Pancreas (tissue), 10 donors: ENCODE measurements at regions of chr3 and their contacts with region 1.

Region 1: GRCh38 chr3:101803173-101803782 is 24.3 kb downstream of the NXPE3 start:
- DNase-seq: peak in 3 of 6 donors; percentile 21 to 49 (median 49)
- ATAC-seq: peak; percentile 93 to 100 (median 98)
- H3K4me3 ChIP-seq: no peak overlapping the region
- H3K27ac ChIP-seq: no peak overlapping the region
- H3K4me1 ChIP-seq: no peaks in the 10 kb centered on the region
- H3K27me3 ChIP-seq: no peaks in the 10 kb centered on the region
- CTCF ChIP-seq: peak; percentile 62 to 86 (median 78)

Region 2: DNA sequence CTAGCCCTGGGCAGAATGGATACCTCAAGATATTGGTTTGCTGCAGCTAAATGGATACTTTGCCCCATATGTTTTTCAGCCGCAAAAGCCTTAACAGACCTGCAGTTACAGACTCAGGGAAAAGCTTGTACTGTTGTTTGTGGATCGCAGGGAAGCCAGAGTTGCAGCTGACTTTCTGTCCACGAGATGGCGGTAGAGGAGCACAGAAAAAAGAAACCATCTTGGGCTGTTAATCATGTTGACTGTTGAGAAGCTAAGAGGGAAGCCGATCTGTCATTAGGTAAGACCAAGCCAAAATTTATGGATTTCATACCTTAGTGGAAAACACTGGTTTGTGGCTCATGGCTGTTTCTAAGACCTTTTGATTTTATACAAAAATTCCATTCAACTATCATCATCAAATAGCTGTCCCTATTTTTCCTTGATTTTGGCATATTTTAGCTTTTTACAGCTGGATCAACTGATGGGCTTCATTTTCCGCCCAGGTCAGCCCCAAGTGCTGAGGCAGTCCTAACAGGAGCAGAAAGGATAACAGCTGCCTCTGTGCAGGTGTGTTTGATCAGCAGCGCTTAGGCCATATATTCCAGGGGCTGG is 425.9 kb after region 1 on chr3:
- intact Hi-C with region 1: loop called in 1 of 3 experiments (anchors 5 kb)
- DNase-seq: peak; percentile 50 to 87 (median 58)
- ATAC-seq: peak; percentile 74 to 88 (median 86)
- H3K4me3 ChIP-seq: no peak overlapping the region
- H3K27ac ChIP-seq: no peak overlapping the region
- H3K4me1 ChIP-seq: peaks cover 0 to 9% (median 6%) of the 10 kb centered on the region in 3 donors
- H3K27me3 ChIP-seq: no peaks in the 10 kb centered on the region
- CTCF ChIP-seq: peak; percentile 89 to 92 (median 92)